ENCODE measurements at regions of chr2 and their contacts with region 1.

Region 1: GRCh38 chr2:30686000-30686399 is 121.2 kb downstream of the CAPN13 start:
- DNase-seq: no peak
- ATAC-seq: no peak
- H3K4me3 Mint-ChIP-seq: no peak overlapping the region
- H3K27ac Mint-ChIP-seq: no peak overlapping the region
- H3K4me1 Mint-ChIP-seq: peaks cover 0 to 8% (median 0%) of the 10 kb centered on the region in 4 donors
- H3K27me3 Mint-ChIP-seq: peaks cover 0 to 4% (median 0%) of the 10 kb centered on the region in 5 donors

Region 2: DNA sequence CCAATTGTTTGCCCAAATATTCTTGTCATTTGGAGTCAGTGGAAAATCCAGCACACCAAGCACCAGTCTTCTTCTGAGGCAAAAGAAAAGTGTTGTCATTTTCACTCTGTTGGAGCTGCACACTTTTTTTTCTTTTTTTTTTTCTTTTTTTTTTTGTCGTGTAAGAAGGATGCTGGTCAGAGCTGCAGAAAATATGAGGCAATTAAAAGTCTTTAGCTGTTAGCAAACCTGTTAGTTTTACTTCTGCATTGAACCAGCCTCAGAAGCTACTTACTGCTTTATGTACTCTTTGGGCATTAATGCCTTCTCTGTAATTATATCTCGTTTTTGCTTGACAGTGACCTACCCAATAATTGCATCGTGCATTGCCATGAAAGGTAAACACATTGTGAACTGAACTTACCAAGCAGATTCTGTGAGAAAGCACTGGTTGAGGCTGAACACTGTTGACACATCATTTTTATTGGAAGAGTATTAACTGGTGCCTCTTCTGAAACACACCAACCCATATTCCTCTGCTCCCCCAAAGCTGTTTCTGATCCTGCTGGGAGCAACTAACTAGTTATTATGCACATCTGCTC is 44.1 kb before region 1 on chr2:
- POLR2A ChIA-PET with region 1: interaction called, 10 read pairs
- DNase-seq: no peak
- ATAC-seq: no peak
- H3K4me3 Mint-ChIP-seq: no peak overlapping the region
- H3K27ac Mint-ChIP-seq: peak overlapping the region in 2 of 10 donors; percentile 26 to 29
- H3K4me1 Mint-ChIP-seq: peaks cover 0 to 10% (median 9%) of the 10 kb centered on the region in 4 donors
- H3K27me3 Mint-ChIP-seq: no peaks in the 10 kb centered on the region

Region 3: GRCh38 chr2:30666307-30666874 is 19.6 kb before region 1 on chr2:
- POLR2A ChIA-PET with region 1: no interaction called
- DNase-seq: no peak
- ATAC-seq: no peak
- H3K4me3 Mint-ChIP-seq: no peak overlapping the region
- H3K27ac Mint-ChIP-seq: peak overlapping the region in 1 of 10 donors; percentile 24
- H3K4me1 Mint-ChIP-seq: no peaks in the 10 kb centered on the region
- H3K27me3 Mint-ChIP-seq: no peaks in the 10 kb centered on the region

Region 4: DNA sequence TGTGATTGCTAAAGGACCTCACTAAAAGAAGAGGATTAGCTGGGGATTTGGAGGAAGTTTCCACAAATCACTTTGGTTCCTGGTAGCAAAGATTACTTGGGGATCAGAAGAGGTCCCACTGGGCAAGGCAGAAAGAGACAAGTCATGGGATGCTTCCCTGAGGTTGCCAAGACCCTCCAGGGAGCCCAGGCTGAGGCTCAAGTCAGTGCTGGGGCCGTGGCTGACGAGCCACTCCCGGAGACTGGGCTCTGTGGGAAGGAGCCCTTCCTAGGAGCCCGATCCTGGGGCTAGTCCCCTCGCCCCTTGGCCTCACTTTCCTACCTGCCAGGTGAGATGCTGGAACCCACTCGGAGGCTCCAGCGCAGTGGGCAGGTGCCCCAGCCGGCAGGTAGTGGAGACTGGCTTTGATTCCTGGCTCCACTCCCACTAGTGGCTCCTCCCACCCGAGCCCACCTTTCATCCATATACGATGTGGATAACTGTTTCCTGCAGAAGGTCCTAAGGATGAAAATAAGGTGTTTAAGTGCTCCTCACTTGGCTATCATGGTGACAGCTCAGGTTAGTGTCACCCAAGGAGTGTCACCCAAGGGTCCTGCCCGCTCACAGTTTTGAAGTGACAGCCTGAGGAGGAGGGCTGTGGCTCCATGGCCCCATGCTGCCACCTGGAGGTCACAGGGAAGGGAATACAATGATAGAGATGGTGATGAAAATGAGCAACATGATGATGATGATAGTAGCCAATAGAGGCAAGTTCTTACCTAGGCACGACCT is 20.7 kb after region 1 on chr2:
- POLR2A ChIA-PET with region 1: no interaction called
- DNase-seq: peak; percentile 54 to 87 (median 70)
- ATAC-seq: peak; percentile 78 to 86
- H3K4me3 Mint-ChIP-seq: peak overlapping the region in 2 of 10 donors; percentile 19 to 40
- H3K27ac Mint-ChIP-seq: peak overlapping the region in 3 of 10 donors; percentile 2 to 76 (median 64)
- H3K4me1 Mint-ChIP-seq: peaks cover 4 to 9% (median 5%) of the 10 kb centered on the region in 4 donors
- H3K27me3 Mint-ChIP-seq: peaks cover 0 to 4% (median 0%) of the 10 kb centered on the region in 5 donors